CD8-positive, alpha-beta T cell (primary cell): ENCODE measurements at regions of chr19 and their contacts with region 1.

Region 1: DNA sequence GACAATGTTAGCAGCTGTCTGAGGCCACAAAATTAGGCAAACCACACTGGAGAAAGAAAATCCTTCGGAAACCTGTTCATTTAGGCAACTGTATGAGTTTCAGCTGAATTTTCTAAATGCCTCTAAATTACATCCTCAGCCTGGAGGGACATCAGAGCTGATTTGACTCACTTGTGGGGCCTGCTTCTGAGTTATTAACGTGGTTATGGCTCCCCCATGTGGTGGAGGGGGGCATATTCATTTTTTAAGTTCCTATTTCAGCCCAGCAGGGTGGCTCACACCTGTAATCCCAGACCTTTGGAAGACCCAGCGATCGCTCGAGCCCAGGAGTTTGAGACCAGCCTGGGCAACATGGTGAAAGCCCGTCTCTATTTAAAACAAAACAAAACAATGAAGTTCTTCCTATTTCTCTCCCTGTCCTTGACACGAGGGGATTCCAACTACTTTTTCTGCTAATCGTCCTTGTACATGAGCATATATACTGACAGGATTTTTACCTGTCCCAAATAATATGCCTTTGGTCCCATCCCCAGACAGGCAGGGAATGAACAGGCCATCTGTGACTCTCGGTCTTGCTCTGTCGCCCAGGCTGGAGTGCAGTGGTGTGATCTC is 31.5 kb upstream of the HIF3A start:
- DNase-seq: peak; percentile 37 to 87 (median 67)
- ATAC-seq: peak; percentile 58
- H3K4me3 ChIP-seq: no peak overlapping the region
- H3K4me3 Mint-ChIP-seq: no peak overlapping the region
- H3K27ac ChIP-seq: no peak overlapping the region
- H3K27ac Mint-ChIP-seq: no peak overlapping the region
- H3K4me1 ChIP-seq: peaks cover 14% of the 10 kb centered on the region
- H3K4me1 Mint-ChIP-seq: peaks cover 17% of the 10 kb centered on the region
- H3K27me3 ChIP-seq: peaks cover 2 to 26% of the 10 kb centered on the region in 2 experiments
- H3K27me3 Mint-ChIP-seq: peaks cover 35% of the 10 kb centered on the region
- CTCF ChIP-seq: peak; percentile 90

Region 2: GRCh38 chr19:45931055-45931454 is 334.3 kb before region 1 on chr19:
- CTCF ChIA-PET with region 1: no interaction called
- POLR2A ChIA-PET with region 1: no interaction called
- intact Hi-C with region 1: no loop called
- DNase-seq: no peak
- ATAC-seq: no peak
- H3K4me3 ChIP-seq: no peak overlapping the region
- H3K4me3 Mint-ChIP-seq: no peak overlapping the region
- H3K27ac ChIP-seq: no peak overlapping the region
- H3K27ac Mint-ChIP-seq: no peak overlapping the region
- H3K4me1 ChIP-seq: peaks cover 7% of the 10 kb centered on the region
- H3K4me1 Mint-ChIP-seq: peaks cover 8% of the 10 kb centered on the region
- H3K27me3 ChIP-seq: peaks cover 6 to 7% of the 10 kb centered on the region in 2 experiments
- H3K27me3 Mint-ChIP-seq: peaks cover 24% of the 10 kb centered on the region
- CTCF ChIP-seq: no peak

Region 3: GRCh38 chr19:46021531-46022041 is 243.7 kb before region 1 on chr19:
- CTCF ChIA-PET with region 1: interaction called, 129 read pairs
- POLR2A ChIA-PET with region 1: no interaction called
- intact Hi-C with region 1: no loop called
- DNase-seq: no peak
- ATAC-seq: no peak
- H3K4me3 ChIP-seq: no peak overlapping the region
- H3K4me3 Mint-ChIP-seq: no peak overlapping the region
- H3K27ac ChIP-seq: no peak overlapping the region
- H3K27ac Mint-ChIP-seq: no peak overlapping the region
- H3K4me1 ChIP-seq: peaks cover 11% of the 10 kb centered on the region
- H3K4me1 Mint-ChIP-seq: peaks cover 16% of the 10 kb centered on the region
- H3K27me3 ChIP-seq: peaks cover 0 to 4% of the 10 kb centered on the region in 2 experiments
- H3K27me3 Mint-ChIP-seq: peaks cover 20% of the 10 kb centered on the region
- CTCF ChIP-seq: no peak

Region 4: DNA sequence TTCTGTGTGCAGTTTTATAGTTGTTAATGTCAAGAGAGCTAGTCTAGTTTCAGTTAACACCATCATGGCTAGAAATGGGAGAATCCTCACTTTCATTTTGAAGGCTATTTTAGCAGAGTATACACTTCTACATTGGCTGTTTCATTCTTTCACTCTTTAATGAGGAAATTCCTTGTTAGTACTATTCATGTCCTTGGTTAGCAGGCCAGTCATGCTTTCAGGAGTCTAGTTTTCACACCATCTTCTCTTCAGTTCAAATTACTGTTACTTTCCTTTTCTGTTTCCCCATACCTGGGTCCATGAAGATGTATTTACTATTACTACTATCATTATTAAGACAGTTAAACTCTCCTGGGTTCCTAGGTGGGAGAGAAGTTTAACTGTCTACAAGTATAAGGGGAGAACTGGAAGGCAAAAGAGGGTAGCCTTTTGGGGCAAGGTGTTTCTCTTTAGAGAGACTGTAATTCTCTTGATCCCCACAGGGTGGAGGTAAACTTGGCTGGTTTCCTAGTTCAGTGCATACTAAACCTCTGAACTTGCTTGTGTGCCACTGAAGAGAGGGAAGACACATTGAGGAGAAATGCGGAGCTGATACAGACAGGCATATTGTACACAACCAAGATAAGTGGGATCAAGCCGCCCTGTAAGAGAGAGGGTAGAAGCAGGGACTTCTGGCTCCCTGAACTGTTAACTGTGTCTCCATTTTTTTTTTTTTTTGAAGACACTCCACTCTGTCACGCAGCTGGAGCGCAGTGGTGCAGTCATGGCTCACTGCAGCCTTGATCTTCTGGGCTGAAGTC is 183.2 kb before region 1 on chr19:
- CTCF ChIA-PET with region 1: interaction called, 5 read pairs
- POLR2A ChIA-PET with region 1: no interaction called
- intact Hi-C with region 1: loop called in 1 of 2 experiments (anchors 1 kb)
- DNase-seq: peak in 2 of 9 experiments; percentile 27 to 47
- ATAC-seq: no peak
- H3K4me3 ChIP-seq: no peak overlapping the region
- H3K4me3 Mint-ChIP-seq: no peak overlapping the region
- H3K27ac ChIP-seq: no peak overlapping the region
- H3K27ac Mint-ChIP-seq: no peak overlapping the region
- H3K4me1 ChIP-seq: peaks cover 6% of the 10 kb centered on the region
- H3K4me1 Mint-ChIP-seq: peaks cover 3% of the 10 kb centered on the region
- H3K27me3 ChIP-seq: peaks cover 7 to 20% of the 10 kb centered on the region in 2 experiments
- H3K27me3 Mint-ChIP-seq: peaks cover 56% of the 10 kb centered on the region
- CTCF ChIP-seq: peak; percentile 50

Region 5: GRCh38 chr19:46232029-46232428 is 33.3 kb before region 1 on chr19:
- CTCF ChIA-PET with region 1: no interaction called
- POLR2A ChIA-PET with region 1: no interaction called
- intact Hi-C with region 1: no loop called
- DNase-seq: no peak
- ATAC-seq: no peak
- H3K4me3 ChIP-seq: no peak overlapping the region
- H3K4me3 Mint-ChIP-seq: no peak overlapping the region
- H3K27ac ChIP-seq: no peak overlapping the region
- H3K27ac Mint-ChIP-seq: no peak overlapping the region
- H3K4me1 ChIP-seq: no peaks in the 10 kb centered on the region
- H3K4me1 Mint-ChIP-seq: no peaks in the 10 kb centered on the region
- H3K27me3 ChIP-seq: peaks cover 0 to 2% of the 10 kb centered on the region in 2 experiments
- H3K27me3 Mint-ChIP-seq: peaks cover 36% of the 10 kb centered on the region
- CTCF ChIP-seq: no peak

Region 6: GRCh38 chr19:46283771-46284170 is 18.4 kb after region 1 on chr19:
- CTCF ChIA-PET with region 1: interaction called, 22 read pairs
- POLR2A ChIA-PET with region 1: no interaction called
- intact Hi-C with region 1: no loop called
- DNase-seq: no peak
- ATAC-seq: no peak
- H3K4me3 ChIP-seq: no peak overlapping the region
- H3K4me3 Mint-ChIP-seq: no peak overlapping the region
- H3K27ac ChIP-seq: no peak overlapping the region
- H3K27ac Mint-ChIP-seq: no peak overlapping the region
- H3K4me1 ChIP-seq: no peaks in the 10 kb centered on the region
- H3K4me1 Mint-ChIP-seq: no peaks in the 10 kb centered on the region
- H3K27me3 ChIP-seq: no peaks in the 10 kb centered on the region
- H3K27me3 Mint-ChIP-seq: peaks cover 9% of the 10 kb centered on the region
- CTCF ChIP-seq: no peak